Panc1 (cell line): ENCODE measurements at regions of chr3 and their contacts with region 1.

Region 1: DNA sequence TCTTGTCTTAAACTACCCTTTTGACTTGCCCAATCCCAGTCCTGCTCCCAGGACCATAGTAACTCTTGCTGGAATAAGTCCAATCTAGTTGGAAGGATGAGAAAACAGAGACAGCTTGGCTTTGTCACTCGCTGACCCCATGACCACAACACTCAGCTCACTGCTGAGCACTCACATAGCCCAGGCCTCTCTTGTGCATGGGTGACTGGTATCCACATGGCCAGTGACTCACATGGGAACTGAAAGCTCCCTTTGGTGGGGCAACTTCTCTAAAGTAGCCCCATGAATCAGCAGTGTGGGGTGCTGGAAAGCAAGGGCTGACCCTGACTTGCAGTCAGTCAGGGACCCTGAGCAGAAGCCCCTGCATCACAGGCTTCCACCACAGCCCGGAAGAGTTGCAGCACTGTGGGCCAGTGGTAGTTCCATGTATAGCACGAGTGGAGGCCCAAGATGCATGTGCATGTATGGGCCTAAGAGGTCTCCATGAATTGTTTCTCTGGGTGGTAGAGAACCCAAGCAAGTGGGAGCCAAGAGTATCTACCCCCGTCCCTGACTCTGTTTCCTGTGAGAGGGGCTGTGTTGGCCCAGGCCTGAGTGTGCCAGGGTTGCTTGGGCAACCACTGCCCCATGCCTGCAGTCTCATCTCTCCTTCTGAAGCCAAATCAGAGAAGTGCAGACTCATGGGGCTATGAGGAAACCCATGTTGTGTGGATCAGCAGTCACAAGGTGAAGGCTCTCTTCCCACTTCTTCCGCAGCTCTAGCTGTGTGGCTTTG is 62.1 kb upstream of the XCR1 start:
- DNase-seq: no peak
- ATAC-seq: no peak
- H3K4me3 ChIP-seq: no peak overlapping the region
- H3K27ac ChIP-seq: no peak overlapping the region
- H3K4me1 ChIP-seq: no peaks in the 10 kb centered on the region
- H3K27me3 ChIP-seq: no peaks in the 10 kb centered on the region
- CTCF ChIP-seq: no peak

Region 2: GRCh38 chr3:46368569-46368968 is 279.1 kb after region 1 on chr3:
- CTCF ChIA-PET with region 1: interaction called, 20 read pairs
- POLR2A ChIA-PET with region 1: no interaction called
- in situ Hi-C with region 1: no loop called
- intact Hi-C with region 1: loop called (anchors 10 kb)
- DNase-seq: no peak
- ATAC-seq: peak; percentile 73
- H3K4me3 ChIP-seq: no peak overlapping the region
- H3K27ac ChIP-seq: no peak overlapping the region
- H3K4me1 ChIP-seq: no peaks in the 10 kb centered on the region
- H3K27me3 ChIP-seq: no peaks in the 10 kb centered on the region; the same call in 1 of the 2 replicates
- CTCF ChIP-seq: peak; percentile 30

Region 3: GRCh38 chr3:46378426-46378942 is 289.1 kb after region 1 on chr3:
- CTCF ChIA-PET with region 1: interaction called, 3 read pairs
- POLR2A ChIA-PET with region 1: no interaction called
- in situ Hi-C with region 1: no loop called
- intact Hi-C with region 1: loop called (anchors 10 kb)
- DNase-seq: no peak
- ATAC-seq: peak; percentile 81
- H3K4me3 ChIP-seq: no peak overlapping the region
- H3K27ac ChIP-seq: no peak overlapping the region
- H3K4me1 ChIP-seq: no peaks in the 10 kb centered on the region
- H3K27me3 ChIP-seq: no peaks in the 10 kb centered on the region; the same call in 1 of the 2 replicates
- CTCF ChIP-seq: peak; percentile 81

Region 4: DNA sequence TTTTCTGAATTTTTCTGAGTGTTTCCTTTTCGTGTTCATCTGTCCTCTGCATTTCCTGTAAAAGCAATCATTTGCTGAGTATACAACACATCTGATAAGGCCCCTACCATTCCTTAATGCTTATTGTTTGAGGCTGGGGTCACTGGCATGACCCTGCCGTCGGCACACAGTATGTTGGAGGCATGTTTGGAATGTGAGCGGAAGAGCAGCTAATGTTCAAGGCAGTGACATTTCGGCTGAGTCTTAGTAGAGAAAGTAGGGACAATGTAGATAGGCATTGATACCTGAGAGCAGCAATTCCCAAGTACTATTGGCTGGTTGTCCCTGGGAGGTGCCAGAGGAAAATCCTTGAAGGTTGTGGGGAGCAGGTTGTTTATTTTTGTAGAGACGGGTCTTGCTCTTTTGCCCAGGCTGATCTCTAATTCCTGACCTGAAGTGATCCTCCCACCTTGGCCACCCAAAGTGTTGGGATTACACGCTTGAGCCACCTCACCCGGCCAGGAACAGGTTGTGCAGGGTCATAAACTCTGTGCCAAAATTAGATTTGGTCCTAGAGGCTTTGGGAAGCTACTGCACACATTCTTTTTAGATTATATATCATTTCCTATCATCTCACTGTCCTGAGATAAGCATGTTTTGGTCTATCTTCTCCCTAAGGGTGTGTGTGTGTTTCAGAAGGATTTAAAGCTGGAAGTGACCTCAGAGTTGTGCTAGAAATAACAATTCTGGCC is 1304.9 kb after region 1 on chr3:
- CTCF ChIA-PET with region 1: no interaction called
- POLR2A ChIA-PET with region 1: no interaction called
- in situ Hi-C with region 1: no loop called
- intact Hi-C with region 1: no loop called
- DNase-seq: no peak
- ATAC-seq: no peak
- H3K4me3 ChIP-seq: no peak overlapping the region
- H3K27ac ChIP-seq: no peak overlapping the region
- H3K4me1 ChIP-seq: peaks cover 5% of the 10 kb centered on the region; the same call in 1 of the 2 replicates
- H3K27me3 ChIP-seq: no peaks in the 10 kb centered on the region
- CTCF ChIP-seq: no peak